ENCODE measurements at regions of chr15 and their contacts with region 1.

Region 1: DNA sequence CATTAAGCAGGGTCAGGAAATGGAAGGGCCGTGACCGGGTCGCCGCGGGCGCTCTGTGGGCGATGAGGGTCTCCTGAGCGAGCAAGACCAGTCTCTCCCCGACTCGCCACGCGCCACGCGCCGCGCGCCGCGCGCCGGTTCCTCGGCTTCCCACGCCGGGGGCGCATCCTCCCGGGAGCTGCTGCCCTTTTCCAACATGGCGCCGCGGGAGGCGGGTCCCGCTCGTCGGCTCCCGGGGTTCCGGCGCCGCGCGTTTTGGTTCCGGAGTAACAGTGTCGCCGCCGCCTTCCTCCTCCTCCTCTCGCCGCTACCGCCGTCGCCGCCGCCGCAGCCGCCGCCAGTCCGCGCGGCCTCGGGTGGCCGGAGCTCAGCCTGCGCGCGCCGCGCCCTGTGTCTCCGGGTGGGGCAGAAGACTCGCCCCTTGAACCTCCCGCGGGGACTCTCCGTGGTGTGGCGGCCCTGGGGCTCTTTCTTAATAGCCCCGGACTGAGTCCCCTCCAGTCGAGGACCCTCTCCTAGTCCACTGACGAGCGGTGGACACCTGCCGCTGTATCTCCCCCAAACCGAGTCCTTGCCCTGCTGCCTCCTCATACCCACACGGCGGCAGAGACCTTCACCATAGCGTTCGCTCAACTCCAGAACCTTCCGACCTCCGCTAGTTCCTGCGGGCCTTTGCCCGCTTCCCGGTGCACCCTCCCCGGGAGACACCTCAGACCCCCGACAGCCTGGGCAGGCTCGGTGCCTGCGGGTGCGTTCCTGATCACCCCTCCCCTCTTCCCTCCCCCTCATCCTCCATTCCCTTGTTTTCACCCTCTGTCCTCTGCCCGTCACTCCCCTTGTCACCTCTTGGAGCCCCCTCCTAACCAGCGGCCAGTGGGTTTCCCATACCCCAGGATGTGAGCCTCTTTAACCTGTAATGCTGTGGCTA is at the start of gene MAP2K5:
- DNase-seq: peak; percentile 81
- H3K4me3 Mint-ChIP-seq: peak within 1 kb of the TSS; percentile 90
- H3K27ac Mint-ChIP-seq: peak within 1 kb of the TSS; percentile 88
- H3K4me1 Mint-ChIP-seq: peaks cover 45% of the 10 kb centered on the region
- H3K27me3 Mint-ChIP-seq: peaks cover 4% of the 10 kb centered on the region
- total RNA-seq, gene MAP2K5: 24.1 and 25.9 TPM in 2 replicates

Region 2: DNA sequence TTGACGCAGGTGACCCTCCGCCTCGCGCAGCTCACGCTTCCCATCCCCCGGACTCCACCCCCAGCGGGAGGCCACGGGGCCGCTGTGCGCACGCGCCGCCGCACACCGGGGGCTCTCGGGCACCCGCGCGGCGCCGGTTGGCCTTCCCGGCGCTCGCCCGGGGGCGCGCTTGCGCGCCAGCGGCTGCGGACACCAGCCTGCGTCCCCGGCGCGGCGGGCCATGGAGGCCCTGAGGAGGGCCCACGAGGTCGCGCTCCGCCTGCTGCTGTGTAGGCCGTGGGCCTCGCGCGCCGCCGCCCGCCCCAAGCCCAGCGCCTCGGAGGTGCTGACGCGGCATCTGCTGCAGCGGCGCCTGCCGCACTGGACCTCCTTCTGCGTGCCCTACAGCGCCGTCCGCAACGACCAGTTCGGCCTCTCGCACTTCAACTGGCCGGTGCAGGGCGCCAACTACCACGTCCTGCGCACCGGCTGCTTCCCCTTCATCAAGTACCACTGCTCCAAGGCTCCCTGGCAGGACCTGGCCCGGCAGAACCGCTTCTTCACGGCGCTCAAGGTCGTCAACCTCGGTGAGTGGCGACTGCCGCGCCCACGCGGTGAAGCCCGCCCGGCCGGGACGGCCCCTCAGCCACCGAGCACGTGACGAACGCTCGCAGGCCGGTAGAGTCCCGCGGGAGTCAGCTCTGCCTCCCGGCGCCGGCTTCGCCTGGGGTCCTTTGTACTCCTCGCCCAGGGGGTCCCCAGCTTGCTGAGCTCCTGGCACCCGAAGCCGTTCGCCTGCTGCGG is 21.5 kb before region 1 on chr15 and contains the start of gene C15orf61:
- intact Hi-C with region 1: loop called (anchors 1 kb)
- DNase-seq: peak; percentile 80
- H3K4me3 Mint-ChIP-seq: peak within 1 kb of the TSS; percentile 90
- H3K27ac Mint-ChIP-seq: peak within 1 kb of the TSS; percentile 85
- H3K4me1 Mint-ChIP-seq: peaks cover 19% of the 10 kb centered on the region
- H3K27me3 Mint-ChIP-seq: no peaks in the 10 kb centered on the region
- total RNA-seq, gene C15orf61: 5.4 and 5.6 TPM in 2 replicates

Region 3: GRCh38 chr15:67531379-67532059 is 11.2 kb before region 1 on chr15:
- intact Hi-C with region 1: loop called (anchors 1 kb)
- DNase-seq: no peak
- H3K4me3 Mint-ChIP-seq: no peak overlapping the region
- H3K27ac Mint-ChIP-seq: no peak overlapping the region
- H3K4me1 Mint-ChIP-seq: peaks cover 20% of the 10 kb centered on the region
- H3K27me3 Mint-ChIP-seq: peaks cover 7% of the 10 kb centered on the region

Region 4: DNA sequence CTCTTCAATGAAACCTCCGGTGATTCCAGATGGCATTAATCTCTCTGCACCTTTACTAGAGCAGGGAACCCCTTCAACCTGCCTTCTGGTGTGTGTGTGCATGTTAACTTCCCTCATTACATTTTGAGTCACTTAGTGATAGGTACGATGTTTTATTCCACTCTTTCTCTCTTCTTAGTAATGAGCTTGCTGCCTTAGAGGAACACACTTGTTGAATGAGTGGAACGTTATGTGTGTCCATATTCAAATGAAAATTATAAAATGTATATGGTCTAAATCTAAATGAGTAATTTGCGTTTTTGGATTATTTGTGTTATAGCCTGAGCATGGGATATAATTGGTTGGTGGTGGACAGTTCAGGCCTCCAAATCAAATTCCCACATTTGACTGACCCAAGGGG is 11.9 kb after region 1 on chr15:
- intact Hi-C with region 1: no loop called
- DNase-seq: no peak
- H3K4me3 Mint-ChIP-seq: no peak overlapping the region
- H3K27ac Mint-ChIP-seq: no peak overlapping the region
- H3K4me1 Mint-ChIP-seq: peaks cover 4% of the 10 kb centered on the region
- H3K27me3 Mint-ChIP-seq: no peaks in the 10 kb centered on the region

Region 5: DNA sequence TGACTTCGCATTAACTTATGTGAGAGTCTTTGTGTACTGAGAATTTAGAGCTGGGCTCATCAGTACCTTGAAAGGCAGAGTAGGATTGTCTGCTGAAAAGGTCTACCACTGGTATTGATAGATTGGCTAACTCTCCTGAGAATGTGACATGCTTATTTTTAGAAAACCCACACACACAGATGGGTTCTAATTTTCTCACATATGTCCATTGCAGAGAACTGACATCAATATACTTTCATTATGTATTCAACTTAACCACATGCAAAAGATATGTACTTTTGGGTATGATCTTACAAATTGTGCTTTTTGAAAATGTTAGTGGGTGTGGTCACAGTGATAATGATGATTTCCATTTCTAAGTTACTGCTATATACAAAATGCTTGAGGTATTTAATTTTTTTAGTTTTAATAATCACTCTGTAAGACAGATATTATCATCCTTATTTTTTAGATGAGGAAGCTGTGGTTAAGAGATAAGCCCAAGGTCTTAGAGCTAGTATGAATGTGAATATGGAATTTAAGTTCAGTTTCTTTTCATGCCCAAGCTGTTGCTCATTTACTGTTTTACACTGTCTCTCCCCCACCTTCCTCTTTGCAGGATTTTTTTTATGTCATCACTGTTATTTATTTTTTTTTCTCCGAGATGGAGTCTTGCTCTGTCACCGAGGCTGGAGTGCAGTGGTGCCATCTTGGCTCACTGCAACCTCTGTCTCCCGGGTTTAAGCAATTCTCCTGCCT is 22.1 kb after region 1 on chr15:
- intact Hi-C with region 1: loop called (anchors 1 kb)
- DNase-seq: no peak
- H3K4me3 Mint-ChIP-seq: no peak overlapping the region
- H3K27ac Mint-ChIP-seq: no peak overlapping the region
- H3K4me1 Mint-ChIP-seq: peaks cover 20% of the 10 kb centered on the region
- H3K27me3 Mint-ChIP-seq: no peaks in the 10 kb centered on the region

Region 6: DNA sequence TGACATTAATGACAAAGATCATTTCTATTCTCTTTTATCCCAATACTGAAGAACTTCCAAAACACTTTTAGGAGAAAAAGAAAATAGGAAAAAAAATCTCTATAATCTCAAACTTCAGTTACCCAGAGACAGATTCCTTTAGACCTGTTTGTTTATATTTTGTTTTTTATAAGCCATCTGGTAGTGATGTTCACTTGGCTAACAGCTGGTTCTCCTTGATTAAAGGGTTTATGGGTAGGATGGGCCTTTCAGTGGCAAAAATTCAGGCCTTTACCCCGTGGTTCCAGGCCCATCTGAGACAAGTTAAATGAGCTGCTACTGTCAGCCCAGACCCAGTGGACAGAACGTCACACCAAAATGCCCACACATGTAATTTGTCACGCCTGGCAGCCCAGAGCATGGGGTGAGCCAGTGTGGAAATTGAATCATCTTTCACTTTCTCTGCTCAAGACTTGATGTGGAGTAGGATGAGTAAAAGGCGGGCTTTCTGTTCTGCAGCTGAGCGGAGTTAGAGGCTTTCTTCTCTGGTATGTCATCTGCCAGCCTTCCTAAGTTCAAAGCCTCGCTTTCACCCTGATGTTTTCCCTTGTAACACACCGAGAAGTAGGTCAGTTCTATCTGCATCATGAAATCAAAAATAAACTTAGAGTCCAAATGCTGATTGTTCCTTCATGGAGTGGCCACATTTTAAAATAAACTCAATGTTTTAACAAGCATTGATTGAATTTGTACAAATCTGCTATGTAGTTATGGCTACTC is 220.1 kb after region 1 on chr15:
- intact Hi-C with region 1: loop called (anchors 2 kb)
- DNase-seq: peak; percentile 39
- H3K4me3 Mint-ChIP-seq: no peak overlapping the region
- H3K27ac Mint-ChIP-seq: peak overlapping the region; percentile 29
- H3K4me1 Mint-ChIP-seq: peaks cover 56% of the 10 kb centered on the region
- H3K27me3 Mint-ChIP-seq: peaks cover 3% of the 10 kb centered on the region